Uterus (tissue), 4 donors: ENCODE measurements at regions of chr21 and their contacts with region 1.

Region 1: DNA sequence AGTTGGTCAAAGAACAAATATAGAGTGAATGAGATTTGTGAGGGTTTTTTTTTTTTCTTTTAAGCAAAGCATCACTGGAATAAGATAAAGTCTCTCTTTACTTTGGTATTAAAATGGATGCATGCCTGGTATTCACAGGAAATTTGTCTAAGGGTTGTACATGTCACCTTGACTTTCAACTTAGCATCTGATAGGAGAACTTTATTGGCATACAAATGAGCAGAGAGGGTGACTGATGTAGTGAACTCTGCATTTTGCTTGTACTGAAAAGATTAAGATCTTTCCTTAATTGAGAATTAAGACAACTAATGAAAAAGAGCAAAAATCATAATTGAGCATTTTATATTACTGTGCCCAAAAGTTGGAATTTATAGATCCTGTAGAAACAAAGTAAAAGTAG is 130.0 kb downstream of the NCAM2 start:
- DNase-seq: no peak
- H3K4me3 ChIP-seq: no peak overlapping the region
- H3K27ac ChIP-seq: no peak overlapping the region
- H3K4me1 ChIP-seq: no peaks in the 10 kb centered on the region
- H3K27me3 ChIP-seq: no peaks in the 10 kb centered on the region
- CTCF ChIP-seq: peak in 1 of 4 experiments; percentile 4
- POLR2A ChIP-seq: no peak

Region 2: GRCh38 chr21:21163904-21164303 is 35.7 kb after region 1 on chr21:
- intact Hi-C with region 1: loop called (anchors 5 kb)
- DNase-seq: peak in 1 of 2 donors; percentile 24
- H3K4me3 ChIP-seq: no peak overlapping the region
- H3K27ac ChIP-seq: no peak overlapping the region
- H3K4me1 ChIP-seq: no peaks in the 10 kb centered on the region
- H3K27me3 ChIP-seq: no peaks in the 10 kb centered on the region
- CTCF ChIP-seq: peak in 3 of 4 experiments; percentile 28 to 52 (median 33)
- POLR2A ChIP-seq: no peak